Activated CD4-positive, alpha-beta memory T cell treated with anti-CD3 and anti-CD28 coated beads for 36 hours (primary cell): ENCODE measurements at regions of chr7 and their contacts with region 1.

Region 1: DNA sequence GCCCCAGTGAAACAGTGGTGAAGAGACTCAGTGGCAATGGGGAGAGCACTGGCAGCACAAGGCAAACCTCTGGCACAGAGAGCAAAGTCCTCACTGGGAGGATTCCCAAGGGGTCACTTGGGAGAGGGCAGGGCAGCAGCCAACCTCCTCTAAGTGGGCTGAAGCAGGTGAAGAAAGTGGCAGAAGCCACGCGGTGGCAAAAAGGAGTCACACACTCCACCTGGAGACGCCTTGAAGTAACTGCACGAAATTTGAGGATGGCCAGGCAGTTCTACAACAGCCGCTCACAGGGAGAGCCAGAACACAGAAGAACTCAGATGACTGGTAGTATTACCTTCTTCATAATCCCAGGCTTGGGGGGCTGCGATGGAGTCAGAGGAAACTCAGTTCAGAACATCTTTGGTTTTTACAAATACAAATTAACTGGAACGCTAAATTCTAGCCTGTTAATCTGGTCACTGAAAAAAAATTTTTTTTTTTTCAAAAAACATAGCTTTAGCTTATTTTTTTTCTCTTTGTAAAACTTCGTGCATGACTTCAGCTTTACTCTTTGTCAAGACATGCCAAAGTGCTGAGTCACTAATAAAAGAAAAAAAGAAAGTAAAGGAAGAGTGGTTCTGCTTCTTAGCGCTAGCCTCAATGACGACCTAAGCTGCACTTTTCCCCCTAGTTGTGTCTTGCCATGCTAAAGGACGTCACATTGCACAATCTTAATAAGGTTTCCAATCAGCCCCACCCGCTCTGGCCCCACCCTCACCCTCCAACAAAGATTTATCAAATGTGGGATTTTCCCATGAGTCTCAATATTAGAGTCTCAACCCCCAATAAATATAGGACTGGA is 435 bp upstream of the IL6 start:
- DNase-seq: peak; percentile 70
- H3K4me3 Mint-ChIP-seq: peak overlapping the region; percentile 57
- H3K27ac Mint-ChIP-seq: no peak overlapping the region
- H3K4me1 Mint-ChIP-seq: peaks cover 26% of the 10 kb centered on the region
- H3K27me3 Mint-ChIP-seq: peaks cover 32% of the 10 kb centered on the region

Region 2: GRCh38 chr7:22640269-22640668 is 86.3 kb before region 1 on chr7:
- CTCF ChIA-PET with region 1: interaction called, 6 read pairs
- POLR2A ChIA-PET with region 1: no interaction called
- intact Hi-C with region 1: loop called (anchors 5 kb)
- DNase-seq: peak; percentile 78
- H3K4me3 Mint-ChIP-seq: no peak overlapping the region
- H3K27ac Mint-ChIP-seq: no peak overlapping the region
- H3K4me1 Mint-ChIP-seq: peaks cover 20% of the 10 kb centered on the region
- H3K27me3 Mint-ChIP-seq: peaks cover 26% of the 10 kb centered on the region

Region 3: DNA sequence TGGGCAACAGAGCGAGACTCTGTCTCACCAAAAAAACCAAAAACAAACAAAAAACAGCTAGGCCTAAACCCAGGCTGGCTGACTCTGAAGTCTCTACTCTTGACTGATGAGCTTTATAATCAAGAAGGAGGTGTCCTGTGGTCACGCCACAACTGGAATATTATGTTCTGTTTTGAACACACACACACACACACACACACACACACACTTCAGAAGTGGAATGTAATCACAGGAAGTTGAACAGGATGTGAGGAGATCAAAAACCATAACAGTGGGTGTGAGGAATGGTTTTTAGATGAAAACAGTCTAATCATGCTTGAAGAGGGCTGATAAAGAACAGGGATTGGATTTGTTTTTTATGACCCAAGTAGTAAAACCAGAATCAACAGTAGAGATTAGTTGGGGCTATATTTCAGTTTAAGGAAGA is 50.6 kb before region 1 on chr7:
- CTCF ChIA-PET with region 1: interaction called, 15 read pairs
- POLR2A ChIA-PET with region 1: no interaction called
- intact Hi-C with region 1: loop called (anchors 5 kb)
- DNase-seq: peak; percentile 61
- H3K4me3 Mint-ChIP-seq: no peak overlapping the region
- H3K27ac Mint-ChIP-seq: peak overlapping the region; percentile 47
- H3K4me1 Mint-ChIP-seq: peaks cover 75% of the 10 kb centered on the region
- H3K27me3 Mint-ChIP-seq: no peaks in the 10 kb centered on the region

Region 4: DNA sequence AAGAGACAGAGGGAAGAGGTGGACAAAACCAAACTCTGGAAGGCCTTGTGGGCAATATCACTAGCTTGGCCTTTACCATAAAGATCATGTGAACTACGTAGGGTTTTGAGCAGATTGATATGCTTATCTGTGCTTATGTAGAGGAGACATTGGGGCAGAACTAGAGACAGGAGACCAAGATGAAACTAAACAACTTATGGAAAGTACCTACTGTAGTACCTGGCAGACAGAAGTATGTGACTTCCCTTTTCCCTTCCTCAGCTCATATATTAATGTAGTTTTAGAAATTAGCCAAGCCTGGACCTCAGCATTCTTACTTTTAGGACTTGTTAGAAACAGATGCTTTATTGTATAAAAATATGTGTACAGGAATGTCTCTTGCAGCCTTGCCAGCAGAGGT is 13.6 kb before region 1 on chr7:
- CTCF ChIA-PET with region 1: interaction called, 13 read pairs
- POLR2A ChIA-PET with region 1: no interaction called
- intact Hi-C with region 1: no loop called
- DNase-seq: no peak
- H3K4me3 Mint-ChIP-seq: no peak overlapping the region
- H3K27ac Mint-ChIP-seq: no peak overlapping the region
- H3K4me1 Mint-ChIP-seq: no peaks in the 10 kb centered on the region
- H3K27me3 Mint-ChIP-seq: peaks cover 3% of the 10 kb centered on the region

Region 5: DNA sequence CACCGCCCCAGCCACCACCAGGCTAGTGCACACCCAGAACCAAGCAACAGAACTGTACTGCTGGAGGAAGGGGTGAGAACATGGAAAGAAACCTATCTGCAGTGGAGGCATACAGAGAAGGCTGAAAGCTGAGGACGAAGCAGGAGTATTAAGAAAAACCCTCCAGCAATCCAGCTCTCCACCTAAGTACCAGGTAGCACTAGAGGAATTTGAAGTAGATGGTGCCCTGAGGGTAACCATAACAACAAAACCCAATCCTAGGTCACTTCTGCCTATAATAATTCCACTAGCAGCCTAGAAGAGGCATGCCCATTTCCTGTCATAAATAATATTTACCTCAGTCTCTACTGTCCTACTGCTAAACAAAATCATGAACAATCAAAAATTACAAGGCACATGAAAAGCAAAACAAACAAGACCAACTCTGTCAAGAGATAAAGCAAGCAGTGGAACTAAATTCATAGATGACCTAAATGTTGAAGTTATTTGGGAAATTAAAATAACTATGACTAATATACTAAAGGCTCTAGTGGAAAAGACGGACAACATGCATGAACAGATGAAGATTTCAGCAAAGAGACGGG is 236.3 kb after region 1 on chr7:
- CTCF ChIA-PET with region 1: no interaction called
- POLR2A ChIA-PET with region 1: no interaction called
- intact Hi-C with region 1: no loop called
- DNase-seq: no peak
- H3K4me3 Mint-ChIP-seq: no peak overlapping the region
- H3K27ac Mint-ChIP-seq: no peak overlapping the region
- H3K4me1 Mint-ChIP-seq: no peaks in the 10 kb centered on the region
- H3K27me3 Mint-ChIP-seq: no peaks in the 10 kb centered on the region